GM12878 (cell line): ENCODE measurements at regions of chr11 and their contacts with region 1.

Region 1: DNA sequence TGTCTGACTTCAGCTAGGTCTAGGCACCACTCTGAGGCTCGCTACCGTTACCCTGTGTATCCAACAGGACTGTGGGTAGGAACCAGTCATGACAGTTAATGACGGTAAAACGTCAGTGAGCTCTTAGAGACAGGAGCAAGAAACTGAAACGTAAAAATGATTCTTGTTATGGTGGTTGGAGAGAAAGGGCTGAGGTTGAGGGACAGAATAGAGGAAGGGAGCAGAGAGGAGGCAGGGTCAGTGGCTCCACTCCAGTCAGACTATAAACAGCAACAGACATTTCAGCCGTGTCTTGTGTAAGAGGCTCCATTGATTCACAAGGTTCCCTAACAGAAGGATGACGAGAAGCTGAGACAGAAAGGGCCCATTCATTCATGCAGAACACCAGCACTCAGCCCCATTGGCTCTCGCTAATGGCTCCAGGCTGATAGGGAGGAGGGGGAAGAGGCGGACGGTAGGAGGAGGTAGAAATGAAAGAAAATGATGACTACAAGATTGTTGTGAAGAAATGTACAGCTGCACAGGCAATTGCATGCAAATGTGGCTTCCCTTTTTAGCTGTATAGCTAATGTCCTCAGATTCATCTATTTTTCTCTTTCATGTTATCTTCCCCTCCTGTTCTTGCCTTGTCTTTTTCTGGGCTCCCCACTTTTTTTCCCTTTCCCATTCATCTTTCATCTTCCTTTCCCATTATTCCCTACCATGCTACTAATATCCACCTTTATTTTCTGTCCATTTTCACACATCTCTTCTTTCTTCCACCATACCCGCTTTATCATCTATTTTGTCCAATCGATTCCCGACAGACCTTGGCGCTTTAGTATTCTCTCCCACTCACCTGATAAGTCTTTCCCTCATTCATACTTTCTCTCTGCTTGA is 34.3 kb downstream of the ETS1 start:
- DNase-seq: peak; percentile 95
- ATAC-seq: peak; percentile 79
- H3K4me3 ChIP-seq: peak overlapping the region; percentile 69
- H3K27ac ChIP-seq: peak overlapping the region; percentile 100
- H3K4me1 ChIP-seq: peaks cover 50% of the 10 kb centered on the region
- H3K27me3 ChIP-seq: no peaks in the 10 kb centered on the region
- CTCF ChIP-seq: no peak
- EP300 ChIP-seq: peak in 1 of 2 experiments; percentile 35; a peak in 2 of 4 replicates
- POLR2A ChIP-seq: peak; percentile 82
- RAD21 ChIP-seq: 0 out of 2 replicates have a peak, but pooled peaks have one; percentile 2

Region 2: GRCh38 chr11:128290106-128290840 is 262.7 kb before region 1 on chr11:
- CTCF ChIA-PET with region 1: interaction called, 48 read pairs
- POLR2A ChIA-PET with region 1: interaction called, 3 read pairs
- RAD21 ChIA-PET with region 1: interaction called, 53 read pairs
- SMC1A ChIA-PET with region 1: interaction called, 74 read pairs
- in situ Hi-C with region 1: no loop called
- intact Hi-C with region 1: loop called (anchors 1 kb)
- DNase-seq: peak; percentile 80
- ATAC-seq: peak; percentile 92
- H3K4me3 ChIP-seq: peak overlapping the region; percentile 53
- H3K27ac ChIP-seq: peak overlapping the region; percentile 75
- H3K4me1 ChIP-seq: peaks cover 25% of the 10 kb centered on the region
- H3K27me3 ChIP-seq: no peaks in the 10 kb centered on the region
- CTCF ChIP-seq: peak; percentile 71 to 89 (median 85)
- EP300 ChIP-seq: peak; percentile 10 to 24; a peak in 1 of 4 replicates
- POLR2A ChIP-seq: peak; percentile 43
- RAD21 ChIP-seq: peak; percentile 99

Region 3: DNA sequence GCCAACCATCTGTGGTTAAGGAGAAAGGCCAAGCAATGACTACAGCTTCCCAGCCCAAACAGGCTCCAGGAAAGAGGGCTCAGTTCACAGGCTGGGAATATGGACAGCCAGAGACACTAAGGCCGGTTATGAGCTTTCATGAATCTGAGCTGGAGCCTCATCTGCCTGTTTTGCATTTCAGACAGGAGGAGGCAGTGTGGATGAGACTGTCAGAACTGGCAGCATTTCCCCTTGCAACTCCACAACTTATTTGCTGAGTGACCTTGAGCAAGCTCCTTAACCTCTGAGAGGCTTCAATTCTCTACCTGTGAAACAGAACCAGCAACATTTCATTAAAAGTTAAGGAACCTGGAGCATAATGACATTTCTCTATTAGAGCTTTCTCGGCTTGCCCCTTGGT is 229.6 kb before region 1 on chr11:
- CTCF ChIA-PET with region 1: interaction called, 11 read pairs
- POLR2A ChIA-PET with region 1: no interaction called
- RAD21 ChIA-PET with region 1: interaction called, 8 read pairs
- SMC1A ChIA-PET with region 1: interaction called, 11 read pairs
- in situ Hi-C with region 1: no loop called
- intact Hi-C with region 1: loop called (anchors 1 kb)
- DNase-seq: no peak
- ATAC-seq: peak; percentile 43
- H3K4me3 ChIP-seq: no peak overlapping the region
- H3K27ac ChIP-seq: no peak overlapping the region
- H3K4me1 ChIP-seq: peaks cover 11% of the 10 kb centered on the region
- H3K27me3 ChIP-seq: no peaks in the 10 kb centered on the region
- CTCF ChIP-seq: peak; percentile 41 to 46 (median 45); a peak in 5 of 6 replicates
- EP300 ChIP-seq: no peak
- POLR2A ChIP-seq: no peak
- RAD21 ChIP-seq: peak; percentile 74

Region 4: GRCh38 chr11:128482512-128483191 is 70.4 kb before region 1 on chr11:
- CTCF ChIA-PET with region 1: interaction called, 10 read pairs
- POLR2A ChIA-PET with region 1: no interaction called
- RAD21 ChIA-PET with region 1: interaction called, 8 read pairs
- SMC1A ChIA-PET with region 1: interaction called, 39 read pairs
- in situ Hi-C with region 1: no loop called
- intact Hi-C with region 1: no loop called
- DNase-seq: no peak
- ATAC-seq: peak; percentile 81
- H3K4me3 ChIP-seq: peak overlapping the region; percentile 37
- H3K27ac ChIP-seq: peak overlapping the region; percentile 97
- H3K4me1 ChIP-seq: peaks cover 42% of the 10 kb centered on the region
- H3K27me3 ChIP-seq: no peaks in the 10 kb centered on the region
- CTCF ChIP-seq: no peak
- EP300 ChIP-seq: peak in 1 of 2 experiments; percentile 44; a peak in 1 of 4 replicates
- POLR2A ChIP-seq: peak; percentile 64
- RAD21 ChIP-seq: 0 out of 2 replicates have a peak, but pooled peaks have one; percentile 1

Region 5: GRCh38 chr11:128535468-128536457 is 17.3 kb before region 1 on chr11:
- CTCF ChIA-PET with region 1: interaction called, 4 read pairs
- POLR2A ChIA-PET with region 1: no interaction called
- RAD21 ChIA-PET with region 1: interaction called, 3 read pairs
- SMC1A ChIA-PET with region 1: interaction called, 20 read pairs
- in situ Hi-C with region 1: no loop called
- intact Hi-C with region 1: no loop called
- DNase-seq: no peak
- ATAC-seq: no peak
- H3K4me3 ChIP-seq: no peak overlapping the region
- H3K27ac ChIP-seq: no peak overlapping the region
- H3K4me1 ChIP-seq: no peaks in the 10 kb centered on the region
- H3K27me3 ChIP-seq: no peaks in the 10 kb centered on the region
- CTCF ChIP-seq: no peak
- EP300 ChIP-seq: no peak
- POLR2A ChIP-seq: no peak
- RAD21 ChIP-seq: no peak

Region 6: DNA sequence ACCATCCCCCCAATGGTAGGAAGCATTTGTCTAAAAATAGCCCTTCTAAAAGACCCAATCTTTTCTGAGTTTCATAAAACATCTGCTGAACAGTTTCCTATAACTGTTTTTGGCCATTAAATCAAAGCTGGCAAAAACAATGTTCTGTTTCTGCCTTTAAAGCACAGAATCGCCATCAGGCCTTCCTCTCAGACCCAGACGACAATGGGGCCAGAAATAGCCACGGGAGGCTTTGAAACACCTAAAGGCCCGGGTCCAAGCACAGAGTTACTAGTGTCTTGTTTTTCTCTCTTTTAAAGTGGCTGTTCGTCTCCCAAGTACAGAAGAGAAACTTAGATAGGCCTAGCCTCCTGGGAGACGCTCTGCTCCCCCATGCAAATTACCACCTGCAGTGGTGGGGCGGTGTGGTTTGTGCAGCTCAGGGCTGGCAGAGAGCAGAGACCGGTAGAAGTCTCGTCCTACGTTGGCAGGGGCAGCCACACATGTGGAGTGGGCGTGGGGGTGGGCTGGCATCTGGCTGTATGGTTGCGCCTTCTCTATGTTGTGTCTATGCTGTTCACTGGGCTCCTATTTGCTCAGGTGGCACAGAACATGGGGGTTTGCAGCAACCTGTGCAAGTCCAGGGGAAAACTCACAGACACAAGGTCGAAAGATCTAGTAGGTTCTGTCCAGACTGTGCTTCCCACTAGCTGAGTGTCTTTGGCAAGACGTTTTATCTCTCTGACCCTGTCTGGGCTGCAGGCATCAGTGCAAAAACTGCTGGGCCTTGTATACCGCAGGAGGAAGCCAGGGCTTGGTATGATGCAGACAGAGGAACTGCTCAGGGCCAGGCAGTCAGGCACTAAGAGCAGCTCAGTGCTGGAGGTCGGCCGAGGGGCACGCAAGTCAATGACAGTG is 57.9 kb after region 1 on chr11:
- CTCF ChIA-PET with region 1: interaction called, 16 read pairs
- POLR2A ChIA-PET with region 1: interaction called, 9 read pairs
- RAD21 ChIA-PET with region 1: interaction called, 40 read pairs
- SMC1A ChIA-PET with region 1: interaction called, 48 read pairs
- in situ Hi-C with region 1: loop called (anchors 5 kb)
- intact Hi-C with region 1: loop called (anchors 1 kb)
- DNase-seq: peak; percentile 93
- ATAC-seq: peak; percentile 97
- H3K4me3 ChIP-seq: peak overlapping the region; percentile 55
- H3K27ac ChIP-seq: peak overlapping the region; percentile 98
- H3K4me1 ChIP-seq: peaks cover 36% of the 10 kb centered on the region
- H3K27me3 ChIP-seq: no peaks in the 10 kb centered on the region
- CTCF ChIP-seq: no peak
- EP300 ChIP-seq: peak; percentile 42 to 86; a peak in 3 of 4 replicates
- POLR2A ChIP-seq: peak; percentile 69
- RAD21 ChIP-seq: no peak; the same call in 1 of the 2 replicates

Region 7: DNA sequence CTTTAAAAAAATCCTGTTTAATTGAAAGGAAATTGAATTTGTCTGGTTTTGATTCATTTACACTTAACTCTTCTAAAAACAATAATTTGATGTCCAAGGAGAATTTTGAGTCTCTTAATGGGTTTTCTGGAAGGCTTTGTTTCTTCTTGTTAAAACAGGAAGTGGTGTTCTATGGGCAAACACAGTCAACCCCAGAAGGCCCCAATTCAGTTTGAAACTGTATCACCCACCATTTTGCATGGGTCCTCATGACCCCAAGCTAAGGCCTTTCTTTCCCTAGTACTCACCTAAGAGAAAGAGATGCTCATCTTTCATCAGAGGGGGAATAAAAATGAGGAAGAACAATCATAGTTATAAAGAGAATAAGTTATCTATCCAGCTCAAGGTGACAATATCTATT is 151.5 kb after region 1 on chr11:
- CTCF ChIA-PET with region 1: no interaction called
- POLR2A ChIA-PET with region 1: no interaction called
- RAD21 ChIA-PET with region 1: no interaction called
- SMC1A ChIA-PET with region 1: no interaction called
- in situ Hi-C with region 1: no loop called
- intact Hi-C with region 1: no loop called
- DNase-seq: no peak
- ATAC-seq: peak; percentile 58
- H3K4me3 ChIP-seq: no peak overlapping the region
- H3K27ac ChIP-seq: no peak overlapping the region
- H3K4me1 ChIP-seq: peaks cover 25% of the 10 kb centered on the region
- H3K27me3 ChIP-seq: no peaks in the 10 kb centered on the region
- CTCF ChIP-seq: no peak
- EP300 ChIP-seq: no peak
- POLR2A ChIP-seq: no peak
- RAD21 ChIP-seq: no peak

Region 8: DNA sequence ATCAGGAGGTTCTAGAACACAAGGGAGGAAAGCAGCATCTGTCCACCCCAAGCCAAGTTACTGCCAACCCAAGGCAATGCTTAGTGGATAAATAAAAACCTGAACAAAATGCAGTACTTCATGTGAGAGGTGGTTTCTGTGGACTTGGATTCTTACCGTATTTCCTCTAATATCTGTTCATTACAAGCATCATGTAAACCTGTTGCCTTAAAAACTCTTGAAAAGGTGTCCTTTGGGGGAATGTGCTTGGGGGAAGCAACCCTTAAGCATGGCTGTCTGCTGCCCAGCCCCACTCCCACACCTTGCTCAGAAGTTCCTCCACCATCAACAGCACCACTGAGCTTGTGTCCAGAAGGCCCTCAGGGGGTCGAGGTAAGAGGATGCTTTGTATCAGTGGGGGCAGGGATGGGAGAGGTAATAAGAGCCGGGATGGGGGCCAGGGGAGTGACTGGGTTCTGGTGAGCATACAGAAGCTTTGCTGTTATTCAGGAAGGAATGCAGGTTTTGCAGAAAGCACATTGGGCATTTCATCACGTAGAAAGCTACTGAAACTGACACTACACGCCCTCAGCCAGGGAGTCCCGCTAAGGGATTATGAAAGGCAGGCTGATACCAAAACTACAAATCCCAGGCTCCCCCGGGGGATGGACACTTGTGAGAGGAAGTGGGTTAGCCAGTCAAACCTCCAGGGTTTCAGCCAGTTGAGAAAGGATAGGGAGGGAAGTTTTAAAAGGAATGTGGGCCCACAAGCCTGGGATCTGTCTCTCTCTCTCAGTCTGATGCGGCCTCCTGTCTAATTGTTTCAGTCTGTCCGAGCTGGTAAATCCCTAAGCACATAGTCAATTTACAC is 262.1 kb after region 1 on chr11:
- CTCF ChIA-PET with region 1: no interaction called
- POLR2A ChIA-PET with region 1: no interaction called
- RAD21 ChIA-PET with region 1: no interaction called
- SMC1A ChIA-PET with region 1: no interaction called
- in situ Hi-C with region 1: no loop called
- intact Hi-C with region 1: no loop called
- DNase-seq: no peak
- ATAC-seq: no peak
- H3K4me3 ChIP-seq: no peak overlapping the region
- H3K27ac ChIP-seq: no peak overlapping the region
- H3K4me1 ChIP-seq: no peaks in the 10 kb centered on the region
- H3K27me3 ChIP-seq: no peaks in the 10 kb centered on the region
- CTCF ChIP-seq: no peak
- EP300 ChIP-seq: no peak
- POLR2A ChIP-seq: no peak
- RAD21 ChIP-seq: no peak